IMR-90 (cell line): ENCODE measurements at regions of chr13 and their contacts with region 1.

Region 1: GRCh38 chr13:56351041-56351440 is 789.7 kb upstream of the PRR20A start:
- DNase-seq: no peak
- ATAC-seq: no peak
- H3K4me3 ChIP-seq: no peak overlapping the region
- H3K27ac ChIP-seq: no peak overlapping the region
- H3K4me1 ChIP-seq: no peaks in the 10 kb centered on the region
- H3K27me3 ChIP-seq: no peaks in the 10 kb centered on the region
- CTCF ChIP-seq: no peak
- POLR2A ChIP-seq: no peak
- RAD21 ChIP-seq: no peak

Region 2: DNA sequence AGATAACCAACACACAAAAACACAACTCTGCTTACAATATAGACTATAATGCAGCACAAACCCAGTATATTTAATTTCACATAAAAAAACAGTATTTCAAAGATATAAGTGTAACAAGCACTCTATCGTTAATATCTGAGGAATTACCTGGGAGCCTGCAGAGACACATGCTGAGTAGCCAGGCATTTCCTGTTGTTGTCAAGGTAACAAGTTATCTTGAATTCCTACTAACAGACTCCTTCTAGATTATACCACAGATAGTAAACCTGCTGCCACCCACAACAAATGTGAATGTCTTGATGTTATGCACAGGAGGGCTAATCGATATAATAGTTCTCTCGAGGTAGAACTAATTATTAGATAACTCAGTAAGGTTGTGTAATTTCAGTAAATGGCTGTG is 36.3 kb before region 1 on chr13:
- CTCF ChIA-PET with region 1: no interaction called
- POLR2A ChIA-PET with region 1: no interaction called
- dilution Hi-C with region 1: no loop called
- in situ Hi-C with region 1: no loop called
- intact Hi-C with region 1: loop called (anchors 5 kb)
- DNase-seq: no peak
- ATAC-seq: no peak
- H3K4me3 ChIP-seq: no peak overlapping the region
- H3K27ac ChIP-seq: no peak overlapping the region
- H3K4me1 ChIP-seq: no peaks in the 10 kb centered on the region
- H3K27me3 ChIP-seq: no peaks in the 10 kb centered on the region
- CTCF ChIP-seq: no peak
- POLR2A ChIP-seq: no peak
- RAD21 ChIP-seq: no peak